A673 (cell line): ENCODE measurements at regions of chr4 and their contacts with region 1.

Region 1: DNA sequence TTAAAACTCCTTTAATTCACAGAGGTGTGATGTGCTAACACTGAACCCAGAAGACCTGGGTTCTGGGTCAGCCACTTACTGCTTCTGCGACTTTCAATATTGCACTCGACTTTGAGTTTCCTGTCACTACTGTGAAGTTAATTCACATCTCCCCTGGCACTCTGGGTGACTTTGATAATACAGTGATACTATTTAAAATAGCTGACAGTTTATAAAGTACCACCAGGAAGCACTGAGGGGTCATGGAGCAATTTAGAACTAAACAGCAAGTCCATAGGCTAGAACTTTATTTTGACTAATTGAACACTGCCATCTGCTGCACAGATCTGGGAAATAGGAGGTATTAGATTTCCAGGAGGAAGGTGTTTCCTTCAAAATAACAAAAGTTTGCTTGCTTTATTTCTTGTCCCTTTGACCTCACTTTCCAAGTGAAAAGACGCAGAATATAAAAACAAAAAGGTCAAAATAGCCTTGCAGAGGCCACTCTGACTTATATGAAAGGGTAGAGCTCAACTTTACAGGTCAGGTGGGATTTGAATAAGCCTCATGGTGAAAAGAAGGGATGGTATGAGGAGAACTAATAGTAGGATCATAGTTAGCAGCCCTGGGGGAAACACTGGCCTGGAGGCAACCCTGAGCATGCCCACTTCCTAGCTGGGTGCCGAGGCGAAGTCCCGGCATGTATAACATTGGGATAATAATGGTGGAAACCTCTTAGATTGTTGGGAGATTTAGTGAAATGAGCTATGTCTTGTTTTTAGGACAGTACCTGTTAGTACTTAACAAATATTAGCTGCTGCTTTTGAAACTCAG is 53.4 kb downstream of the ZNF518B start:
- DNase-seq: peak; percentile 23
- H3K4me3 ChIP-seq: no peak overlapping the region
- H3K27ac ChIP-seq: no peak overlapping the region
- H3K4me1 ChIP-seq: no peaks in the 10 kb centered on the region
- H3K27me3 ChIP-seq: no peaks in the 10 kb centered on the region
- CTCF ChIP-seq: peak; percentile 45

Region 2: GRCh38 chr4:10157478-10158332 is 246.1 kb before region 1 on chr4:
- CTCF ChIA-PET with region 1: interaction called, 4 read pairs
- POLR2A ChIA-PET with region 1: no interaction called
- intact Hi-C with region 1: loop called (anchors 2 kb)
- DNase-seq: peak; percentile 75
- H3K4me3 ChIP-seq: no peak overlapping the region
- H3K27ac ChIP-seq: no peak overlapping the region
- H3K4me1 ChIP-seq: no peaks in the 10 kb centered on the region
- H3K27me3 ChIP-seq: peaks cover 34% of the 10 kb centered on the region
- CTCF ChIP-seq: peak; percentile 78

Region 3: GRCh38 chr4:10384974-10385373 is 18.9 kb before region 1 on chr4:
- CTCF ChIA-PET with region 1: no interaction called
- POLR2A ChIA-PET with region 1: no interaction called
- intact Hi-C with region 1: loop called (anchors 1 kb)
- DNase-seq: no peak
- H3K4me3 ChIP-seq: no peak overlapping the region
- H3K27ac ChIP-seq: no peak overlapping the region
- H3K4me1 ChIP-seq: no peaks in the 10 kb centered on the region
- H3K27me3 ChIP-seq: no peaks in the 10 kb centered on the region
- CTCF ChIP-seq: no peak